ENCODE measurements at regions of chr3 and their contacts with region 1.

Region 1: DNA sequence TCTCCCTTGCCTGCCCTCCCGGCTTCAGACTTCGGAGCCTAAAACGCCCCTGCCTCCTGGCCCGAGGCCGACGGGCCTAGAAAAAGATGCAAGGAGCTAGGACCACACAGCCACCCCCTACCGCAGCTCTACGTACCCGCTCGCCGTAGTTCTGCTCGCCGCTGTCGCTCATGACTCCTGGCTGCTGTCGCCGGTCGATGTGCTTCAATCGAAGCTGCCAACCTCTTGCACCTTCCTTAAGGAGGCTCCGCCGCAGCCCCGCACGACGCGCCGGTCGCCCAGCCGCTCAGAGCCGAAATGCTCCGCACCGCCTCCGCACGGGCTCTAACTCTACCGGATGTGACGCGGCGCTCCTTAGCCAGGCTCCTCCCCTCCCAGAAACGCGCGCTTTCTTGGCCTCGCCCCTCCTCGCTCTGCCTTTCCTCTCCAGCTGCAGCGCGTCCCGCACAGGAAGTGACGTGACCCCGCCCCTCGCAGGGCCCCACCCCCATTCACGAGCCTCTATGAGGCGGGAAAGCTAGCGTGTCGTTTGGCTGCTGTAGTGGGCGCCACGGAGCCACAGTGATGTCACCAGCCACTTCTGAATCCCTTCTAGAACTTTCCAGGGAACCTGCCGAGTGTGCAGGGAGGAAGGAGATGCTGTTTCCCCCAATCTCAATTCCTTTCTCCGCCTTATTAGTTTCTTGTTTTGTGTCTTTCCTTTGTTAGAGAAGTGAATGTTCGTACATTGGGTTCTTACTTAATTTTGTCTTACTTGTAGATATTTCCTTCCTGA is at the start of gene TRA2B:
- DNase-seq: peak; percentile 99
- H3K4me3 ChIP-seq: peak within 1 kb of the TSS; percentile 99 to 100
- H3K27ac ChIP-seq: peak within 1 kb of the TSS; percentile 100
- H3K4me1 ChIP-seq: no peaks in the 10 kb centered on the region
- H3K27me3 ChIP-seq: no peaks in the 10 kb centered on the region
- CTCF ChIP-seq: peak in 3 of 4 experiments; percentile 6 to 40 (median 25)
- POLR2A ChIP-seq: peak; percentile 99 to 100
- total RNA-seq, gene TRA2B: 33.8 to 425 (median 173) TPM

Region 2: GRCh38 chr3:185677146-185677829 is 260.6 kb before region 1 on chr3:
- intact Hi-C with region 1: no loop called
- DNase-seq: no peak
- H3K4me3 ChIP-seq: no peak overlapping the region
- H3K27ac ChIP-seq: no peak overlapping the region
- H3K4me1 ChIP-seq: no peaks in the 10 kb centered on the region
- H3K27me3 ChIP-seq: no peaks in the 10 kb centered on the region
- CTCF ChIP-seq: peak; percentile 17 to 46 (median 32)
- POLR2A ChIP-seq: no peak

Region 3: DNA sequence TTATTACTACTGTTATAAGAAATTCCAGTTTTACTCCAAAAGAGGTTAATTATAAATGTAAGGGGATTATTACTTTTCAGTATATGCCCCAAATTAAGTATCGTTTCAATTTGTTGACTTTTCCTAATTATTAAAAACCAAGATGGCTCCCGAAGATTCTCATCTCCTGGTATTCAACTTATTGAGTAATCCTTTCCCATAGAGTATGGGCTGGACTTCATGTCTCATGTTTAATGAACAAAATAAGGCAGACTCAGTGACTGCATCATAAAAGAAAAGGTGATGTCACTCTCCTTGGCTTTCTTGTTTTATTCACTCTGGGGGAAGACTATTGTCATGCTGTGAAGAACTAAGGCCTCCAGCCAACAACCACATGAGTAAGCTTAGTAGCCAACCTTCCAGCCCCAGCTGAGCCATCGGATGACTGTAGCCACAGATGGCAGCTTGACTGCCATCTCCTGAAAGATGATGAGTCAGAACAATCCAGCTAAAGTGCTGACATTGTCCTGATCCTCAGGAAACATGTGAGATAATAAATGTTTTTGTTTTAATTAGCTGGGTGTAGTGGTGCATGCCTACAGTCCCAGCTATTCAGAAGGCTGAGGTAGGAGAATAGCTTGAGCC is 130.3 kb before region 1 on chr3:
- intact Hi-C with region 1: no loop called
- DNase-seq: no peak
- H3K4me3 ChIP-seq: no peak overlapping the region
- H3K27ac ChIP-seq: no peak overlapping the region
- H3K4me1 ChIP-seq: no peaks in the 10 kb centered on the region
- H3K27me3 ChIP-seq: no peaks in the 10 kb centered on the region
- CTCF ChIP-seq: no peak
- POLR2A ChIP-seq: no peak

Region 4: DNA sequence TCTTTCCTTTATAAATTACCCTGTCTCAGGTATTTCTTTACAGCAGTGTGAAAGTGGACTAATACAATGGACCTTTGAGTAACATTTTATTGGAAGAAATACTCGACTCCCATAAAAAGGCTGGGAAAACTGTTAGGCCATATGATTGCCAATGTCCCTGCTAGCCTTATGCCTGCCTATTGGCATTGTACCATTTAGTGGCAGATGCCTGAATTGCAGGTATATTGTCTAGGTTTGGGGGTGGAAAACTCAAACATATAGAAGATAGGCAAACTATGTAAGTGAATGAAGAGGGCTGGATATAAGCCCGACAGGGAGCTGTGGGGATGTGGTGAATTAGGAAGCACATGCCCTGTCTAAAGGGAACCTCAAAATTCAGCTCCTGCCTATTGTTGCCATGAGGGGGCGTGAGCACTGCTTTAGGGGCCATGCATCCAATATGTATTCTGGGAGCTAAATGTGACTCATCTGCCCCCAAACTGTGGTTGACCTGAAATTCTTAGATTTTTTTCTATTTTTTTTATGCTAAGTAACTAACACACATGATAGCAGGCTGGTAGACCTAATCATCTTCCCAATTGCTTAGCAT is 65.1 kb after region 1 on chr3:
- intact Hi-C with region 1: no loop called
- DNase-seq: no peak
- H3K4me3 ChIP-seq: no peak overlapping the region
- H3K27ac ChIP-seq: no peak overlapping the region
- H3K4me1 ChIP-seq: no peaks in the 10 kb centered on the region
- H3K27me3 ChIP-seq: no peaks in the 10 kb centered on the region
- CTCF ChIP-seq: no peak
- POLR2A ChIP-seq: no peak

Region 5: DNA sequence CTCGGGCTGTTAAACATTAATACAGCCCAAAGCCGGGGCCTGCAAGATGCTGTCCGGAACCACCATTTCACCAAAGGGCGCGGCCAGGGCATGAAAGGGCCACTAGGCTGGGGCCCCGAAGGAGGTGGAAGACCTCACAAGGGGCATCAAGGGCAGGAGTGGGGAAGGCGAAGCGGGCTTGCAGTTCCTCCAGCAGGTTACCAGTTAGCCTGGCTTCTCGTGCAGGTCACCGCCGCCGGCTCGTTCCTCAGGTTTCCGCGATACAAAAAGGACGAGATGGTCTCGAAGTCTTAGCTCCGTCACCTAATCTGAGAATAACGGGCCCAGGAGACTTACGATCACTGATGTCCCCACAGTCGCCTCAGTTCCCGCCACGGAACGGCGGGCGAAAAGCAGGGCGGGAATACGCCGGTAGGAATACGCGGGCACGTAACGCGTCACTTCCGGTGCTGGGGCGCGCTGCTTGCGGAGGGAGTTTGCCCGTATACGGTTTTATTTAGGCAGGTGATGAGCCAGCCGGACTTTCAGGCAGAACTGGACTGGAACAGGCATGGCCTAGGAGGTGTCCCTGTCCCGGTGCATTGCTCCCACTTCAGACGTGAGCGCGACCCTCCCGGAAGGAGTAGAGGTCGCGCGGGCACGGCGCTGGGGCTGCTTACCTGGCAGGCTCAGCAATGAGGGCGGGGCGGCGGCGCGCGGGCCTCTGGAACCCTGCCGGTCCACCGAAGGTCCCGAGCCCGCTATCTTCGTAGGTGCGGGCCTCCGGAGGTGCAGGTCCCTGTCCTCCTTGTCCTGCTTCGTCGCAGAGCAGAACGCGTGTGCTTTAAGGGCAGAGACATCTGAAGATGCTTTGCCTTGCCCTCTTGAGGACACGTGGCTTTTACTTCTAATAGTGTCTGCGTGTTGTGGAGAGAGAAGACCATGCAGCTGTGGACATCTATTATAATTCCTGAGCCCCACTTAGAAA is 868.5 kb after region 1 on chr3 and contains the start of gene RFC4:
- intact Hi-C with region 1: loop called (anchors 10 kb)
- DNase-seq: peak; percentile 82 to 85
- H3K4me3 ChIP-seq: peak within 1 kb of the TSS; percentile 66 to 71
- H3K27ac ChIP-seq: peak within 1 kb of the TSS; percentile 82 to 87
- H3K4me1 ChIP-seq: no peaks in the 10 kb centered on the region
- H3K27me3 ChIP-seq: no peaks in the 10 kb centered on the region
- CTCF ChIP-seq: peak in 1 of 4 experiments; percentile 4
- POLR2A ChIP-seq: peak in 1 of 2 donors; percentile 42
- total RNA-seq, gene RFC4: 2.8 to 43.8 (median 26.6) TPM